ENCODE measurements at regions of chr20 and their contacts with region 1.

Region 1: DNA sequence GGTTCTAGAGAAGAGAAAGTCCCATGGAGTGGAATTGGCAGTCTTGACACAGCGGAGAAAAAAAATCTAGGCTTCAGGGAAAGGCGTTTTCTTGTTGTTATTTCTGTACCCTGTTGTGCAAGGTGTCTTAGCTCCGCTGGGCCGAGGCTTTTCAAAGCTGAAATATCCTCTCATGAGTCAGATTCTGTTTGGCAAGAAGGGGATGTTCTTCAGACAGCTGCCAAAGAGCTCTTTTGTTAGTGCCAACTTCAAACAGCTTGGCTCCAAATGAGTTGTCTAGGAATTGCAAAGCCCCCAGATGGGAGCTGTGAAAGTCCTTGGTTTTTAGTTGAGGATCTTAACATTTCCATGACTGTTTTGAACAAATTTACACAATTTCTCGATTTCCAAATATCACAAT is 45.6 kb downstream of the LRRN4 start:
- DNase-seq: peak in 1 of 2 experiments; percentile 30
- H3K4me3 ChIP-seq: peak overlapping the region; percentile 8; the same call in 1 of the 2 replicates
- H3K4me3 Mint-ChIP-seq: peak overlapping the region; percentile 89
- H3K27ac Mint-ChIP-seq: peak overlapping the region; percentile 75
- H3K4me1 ChIP-seq: peaks cover 12% of the 10 kb centered on the region
- H3K4me1 Mint-ChIP-seq: peaks cover 17% of the 10 kb centered on the region
- H3K27me3 ChIP-seq: no peaks in the 10 kb centered on the region
- H3K27me3 Mint-ChIP-seq: no peaks in the 10 kb centered on the region
- CTCF ChIP-seq: no peak

Region 2: GRCh38 chr20:5950271-5951031 is 57.8 kb before region 1 on chr20 and contains the starts of genes MCM8 and TRMT6:
- CTCF ChIA-PET with region 1: no interaction called
- POLR2A ChIA-PET with region 1: interaction called, 8 read pairs
- intact Hi-C with region 1: loop called (anchors 1 kb)
- DNase-seq: peak; percentile 98 to 99
- H3K4me3 ChIP-seq: peak within 1 kb of the TSS; percentile 60
- H3K4me3 Mint-ChIP-seq: peak within 1 kb of the TSS; percentile 99
- H3K27ac Mint-ChIP-seq: peak within 1 kb of the TSS; percentile 86
- H3K4me1 ChIP-seq: peaks cover 15% of the 10 kb centered on the region
- H3K4me1 Mint-ChIP-seq: no peaks in the 10 kb centered on the region
- H3K27me3 ChIP-seq: no peaks in the 10 kb centered on the region
- H3K27me3 Mint-ChIP-seq: no peaks in the 10 kb centered on the region
- CTCF ChIP-seq: no peak
- total RNA-seq, gene MCM8: 36.4 and 38.4 TPM in 2 replicates
- total RNA-seq, gene TRMT6: 30.0 and 35.5 TPM in 2 replicates

Region 3: DNA sequence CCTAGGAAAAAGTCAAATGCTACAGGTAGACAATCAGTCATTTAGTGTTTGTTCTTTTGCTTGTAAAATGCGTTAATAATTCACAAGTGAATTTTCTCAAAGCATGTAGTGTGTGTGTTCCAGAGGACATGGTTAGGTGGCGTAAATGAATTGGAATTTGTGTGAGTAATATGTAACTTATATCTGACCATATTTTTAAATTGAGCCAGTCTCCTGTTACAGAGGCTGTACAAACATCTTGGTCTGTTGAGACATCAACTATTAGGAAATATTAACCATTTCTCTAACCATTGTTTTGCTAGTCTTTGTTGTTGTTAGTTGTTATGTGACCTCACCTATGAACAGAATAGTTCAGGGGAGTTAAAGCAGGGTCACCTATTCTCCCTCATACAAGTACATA is 35.1 kb before region 1 on chr20:
- CTCF ChIA-PET with region 1: no interaction called
- POLR2A ChIA-PET with region 1: no interaction called
- intact Hi-C with region 1: no loop called
- DNase-seq: peak in 1 of 2 experiments; percentile 43
- H3K4me3 ChIP-seq: no peak overlapping the region
- H3K4me3 Mint-ChIP-seq: no peak overlapping the region
- H3K27ac Mint-ChIP-seq: no peak overlapping the region
- H3K4me1 ChIP-seq: peaks cover 17% of the 10 kb centered on the region
- H3K4me1 Mint-ChIP-seq: peaks cover 32% of the 10 kb centered on the region
- H3K27me3 ChIP-seq: no peaks in the 10 kb centered on the region
- H3K27me3 Mint-ChIP-seq: no peaks in the 10 kb centered on the region
- CTCF ChIP-seq: no peak

Measured in Caco-2 (cell line).